ENCODE measurements at regions of chr1 and their contacts with region 1.

Region 1: GRCh38 chr1:23916209-23917131 is 3.3 kb upstream of the CNR2 start:
- DNase-seq: peak; percentile 86
- ATAC-seq: peak; percentile 53
- H3K4me3 ChIP-seq: peak overlapping the region in 2 of 5 experiments; percentile 22 to 50
- H3K4me3 Mint-ChIP-seq: peak overlapping the region; percentile 47
- H3K27ac ChIP-seq: peak overlapping the region; percentile 48 to 77
- H3K27ac Mint-ChIP-seq: peak overlapping the region; percentile 90
- H3K4me1 ChIP-seq: peaks cover 52 to 72% of the 10 kb centered on the region in 2 donors
- H3K4me1 Mint-ChIP-seq: peaks cover 64% of the 10 kb centered on the region
- H3K27me3 ChIP-seq: no peaks in the 10 kb centered on the region
- H3K27me3 Mint-ChIP-seq: no peaks in the 10 kb centered on the region
- CTCF ChIP-seq: peak; percentile 80

Region 2: DNA sequence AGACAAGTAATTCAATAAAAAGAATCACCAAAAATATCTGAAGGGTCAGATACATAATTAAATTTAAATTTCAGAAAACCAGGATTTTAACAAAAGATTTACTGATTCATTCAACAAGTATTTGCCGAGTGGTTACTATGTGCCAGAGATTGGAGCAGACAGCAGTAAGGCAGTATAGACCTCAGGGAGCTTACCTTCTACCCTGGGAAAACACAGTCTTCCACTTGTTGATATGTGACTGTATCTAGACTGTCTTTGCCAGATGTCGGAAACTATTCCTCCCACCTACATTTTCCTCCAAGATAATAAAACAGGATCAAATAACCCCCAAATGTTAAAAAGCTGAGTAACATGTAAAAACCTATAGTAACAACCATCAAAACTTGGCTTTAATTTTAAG is 578.6 kb before region 1 on chr1:
- CTCF ChIA-PET with region 1: no interaction called
- POLR2A ChIA-PET with region 1: no interaction called
- intact Hi-C with region 1: no loop called
- DNase-seq: no peak
- ATAC-seq: no peak
- H3K4me3 ChIP-seq: no peak overlapping the region
- H3K4me3 Mint-ChIP-seq: no peak overlapping the region
- H3K27ac ChIP-seq: no peak overlapping the region
- H3K27ac Mint-ChIP-seq: no peak overlapping the region
- H3K4me1 ChIP-seq: peaks cover 13 to 40% of the 10 kb centered on the region in 2 donors
- H3K4me1 Mint-ChIP-seq: peaks cover 40% of the 10 kb centered on the region
- H3K27me3 ChIP-seq: no peaks in the 10 kb centered on the region
- H3K27me3 Mint-ChIP-seq: no peaks in the 10 kb centered on the region
- CTCF ChIP-seq: no peak

Region 3: GRCh38 chr1:23743287-23744052 is 173.0 kb before region 1 on chr1 and contains the start of gene ELOA:
- CTCF ChIA-PET with region 1: interaction called, 12 read pairs
- POLR2A ChIA-PET with region 1: no interaction called
- intact Hi-C with region 1: no loop called
- DNase-seq: peak; percentile 84
- ATAC-seq: peak; percentile 91
- H3K4me3 ChIP-seq: peak within 1 kb of the TSS; percentile 72 to 92 (median 86)
- H3K4me3 Mint-ChIP-seq: peak within 1 kb of the TSS; percentile 93
- H3K27ac ChIP-seq: peak within 1 kb of the TSS; percentile 68 to 88
- H3K27ac Mint-ChIP-seq: peak within 1 kb of the TSS; percentile 94
- H3K4me1 ChIP-seq: peaks cover 22 to 36% of the 10 kb centered on the region in 2 donors
- H3K4me1 Mint-ChIP-seq: peaks cover 50% of the 10 kb centered on the region
- H3K27me3 ChIP-seq: no peaks in the 10 kb centered on the region
- H3K27me3 Mint-ChIP-seq: no peaks in the 10 kb centered on the region
- CTCF ChIP-seq: no peak
- total RNA-seq, gene ELOA: 53.0 and 56.6 TPM in 2 replicates

Region 4: DNA sequence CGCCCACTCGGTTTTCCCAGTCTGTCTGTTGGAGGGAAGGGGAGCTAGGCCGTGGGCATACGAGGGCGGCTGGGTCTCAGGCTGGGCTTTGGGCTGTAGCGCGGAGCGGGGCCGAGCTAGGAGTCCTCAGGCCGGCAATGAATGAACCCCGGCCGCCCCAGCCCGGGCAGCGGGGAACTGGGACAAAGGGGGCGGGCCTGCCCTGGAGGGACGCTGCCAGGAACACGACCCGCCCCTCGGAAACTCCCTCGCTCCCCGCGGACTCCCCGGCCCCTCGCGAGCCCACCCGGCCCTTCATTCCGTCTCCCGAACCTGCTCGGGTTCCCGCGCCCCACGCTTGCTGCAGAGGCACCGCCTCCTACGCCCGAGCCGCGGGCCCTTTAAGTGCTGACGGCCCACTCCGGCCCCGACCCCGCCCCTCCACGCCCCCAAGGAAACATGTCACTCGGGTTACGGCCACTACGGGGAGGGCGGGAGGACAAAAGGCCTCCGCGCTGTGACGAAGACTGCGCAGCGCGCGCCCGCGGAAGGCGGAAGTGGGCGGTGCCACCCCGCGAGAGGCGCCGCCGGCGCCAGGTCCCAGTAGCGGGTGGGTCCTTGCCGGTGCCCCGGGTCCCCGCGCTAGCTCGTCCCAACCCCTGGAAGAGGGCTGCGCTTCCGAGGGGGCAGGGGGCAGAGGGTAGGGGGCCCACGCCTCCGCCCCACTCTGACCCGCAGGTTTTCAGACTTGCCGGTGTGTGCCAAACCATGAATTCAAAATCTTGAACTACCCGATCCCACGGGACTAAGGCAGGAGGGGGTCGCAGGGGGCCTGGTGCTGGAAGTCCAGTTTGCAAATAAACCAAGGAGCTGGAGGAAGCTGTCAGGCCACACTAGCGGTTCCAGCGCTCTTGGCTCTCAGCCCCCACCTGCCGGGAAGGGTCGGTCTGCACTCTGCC is 115.8 kb before region 1 on chr1 and contains the start of gene GALE:
- CTCF ChIA-PET with region 1: interaction called, 10 read pairs
- POLR2A ChIA-PET with region 1: interaction called, 5 read pairs
- intact Hi-C with region 1: no loop called
- DNase-seq: peak; percentile 98
- ATAC-seq: peak; percentile 94
- H3K4me3 ChIP-seq: peak within 1 kb of the TSS; percentile 39 to 99 (median 80)
- H3K4me3 Mint-ChIP-seq: peak within 1 kb of the TSS; percentile 95
- H3K27ac ChIP-seq: peak within 1 kb of the TSS; percentile 79 to 93
- H3K27ac Mint-ChIP-seq: peak within 1 kb of the TSS; percentile 87
- H3K4me1 ChIP-seq: peaks cover 15 to 20% of the 10 kb centered on the region in 2 donors
- H3K4me1 Mint-ChIP-seq: peaks cover 18% of the 10 kb centered on the region
- H3K27me3 ChIP-seq: no peaks in the 10 kb centered on the region
- H3K27me3 Mint-ChIP-seq: no peaks in the 10 kb centered on the region
- CTCF ChIP-seq: no peak
- total RNA-seq, gene GALE: 12.1 TPM in 2 replicates

Region 5: DNA sequence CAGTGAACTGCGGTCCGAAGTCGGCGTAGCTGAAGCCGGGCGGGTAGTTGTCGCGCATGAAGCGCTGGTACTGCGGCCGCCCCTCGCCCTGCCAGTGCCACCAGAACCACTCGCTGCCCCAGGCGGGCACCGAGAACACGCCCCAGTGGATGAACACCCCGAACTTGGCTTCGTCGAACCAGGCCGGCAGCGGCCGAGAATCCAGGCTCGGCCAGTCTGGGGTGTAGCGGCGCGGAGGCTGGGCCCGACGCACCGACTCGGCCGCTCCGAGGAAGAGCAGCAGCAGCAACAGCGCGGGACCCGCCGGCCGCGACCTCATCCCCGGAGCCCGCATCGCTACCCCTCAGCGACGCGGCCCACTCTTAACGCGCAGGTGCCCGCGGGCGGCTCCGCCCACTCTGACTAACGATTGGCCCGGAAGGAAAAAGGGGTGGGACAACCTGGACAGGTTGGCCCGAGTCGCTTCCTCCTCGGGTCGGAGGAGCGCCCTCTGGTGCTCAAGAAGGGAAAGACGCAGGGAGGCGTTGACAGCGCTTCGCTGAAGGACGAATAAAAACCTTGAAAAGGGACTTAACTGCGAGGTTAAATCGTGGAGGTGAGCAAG is 48.4 kb before region 1 on chr1 and contains the start of gene FUCA1:
- CTCF ChIA-PET with region 1: interaction called, 37 read pairs
- POLR2A ChIA-PET with region 1: interaction called, 7 read pairs
- intact Hi-C with region 1: loop called (anchors 1 kb)
- DNase-seq: peak; percentile 97
- ATAC-seq: peak; percentile 98
- H3K4me3 ChIP-seq: peak within 1 kb of the TSS; percentile 42 to 81 (median 61)
- H3K4me3 Mint-ChIP-seq: peak within 1 kb of the TSS; percentile 93
- H3K27ac ChIP-seq: peak within 1 kb of the TSS in 1 of 2 donors; percentile 73
- H3K27ac Mint-ChIP-seq: peak within 1 kb of the TSS; percentile 91
- H3K4me1 ChIP-seq: peaks cover 18% of the 10 kb centered on the region in 2 donors
- H3K4me1 Mint-ChIP-seq: peaks cover 45% of the 10 kb centered on the region
- H3K27me3 ChIP-seq: no peaks in the 10 kb centered on the region
- H3K27me3 Mint-ChIP-seq: no peaks in the 10 kb centered on the region
- CTCF ChIP-seq: peak; percentile 93
- total RNA-seq, gene FUCA1: 17.4 and 19.3 TPM in 2 replicates

Region 6: GRCh38 chr1:23902321-23903278 is 13.9 kb before region 1 on chr1:
- CTCF ChIA-PET with region 1: interaction called, 28 read pairs
- POLR2A ChIA-PET with region 1: interaction called, 81 read pairs
- intact Hi-C with region 1: loop called (anchors 2 kb)
- DNase-seq: no peak
- ATAC-seq: peak; percentile 26
- H3K4me3 ChIP-seq: peak overlapping the region in 2 of 5 experiments; percentile 22 to 27
- H3K4me3 Mint-ChIP-seq: peak overlapping the region; percentile 61
- H3K27ac ChIP-seq: peak overlapping the region in 1 of 2 donors; percentile 43
- H3K27ac Mint-ChIP-seq: peak overlapping the region; percentile 73
- H3K4me1 ChIP-seq: peaks cover 77 to 86% of the 10 kb centered on the region in 2 donors
- H3K4me1 Mint-ChIP-seq: peaks cover 74% of the 10 kb centered on the region
- H3K27me3 ChIP-seq: no peaks in the 10 kb centered on the region
- H3K27me3 Mint-ChIP-seq: no peaks in the 10 kb centered on the region
- CTCF ChIP-seq: no peak

Region 7: GRCh38 chr1:24027838-24028468 is 111.5 kb after region 1 on chr1:
- CTCF ChIA-PET with region 1: interaction called, 10 read pairs
- POLR2A ChIA-PET with region 1: no interaction called
- intact Hi-C with region 1: no loop called
- DNase-seq: peak; percentile 37
- ATAC-seq: no peak
- H3K4me3 ChIP-seq: no peak overlapping the region
- H3K4me3 Mint-ChIP-seq: no peak overlapping the region
- H3K27ac ChIP-seq: no peak overlapping the region
- H3K27ac Mint-ChIP-seq: no peak overlapping the region
- H3K4me1 ChIP-seq: no peaks in the 10 kb centered on the region
- H3K4me1 Mint-ChIP-seq: peaks cover 5% of the 10 kb centered on the region
- H3K27me3 ChIP-seq: no peaks in the 10 kb centered on the region
- H3K27me3 Mint-ChIP-seq: no peaks in the 10 kb centered on the region
- CTCF ChIP-seq: peak; percentile 50

Measured in B cell (primary cell).